Breast epithelium (tissue), 4 donors: ENCODE measurements at regions of chr17 and their contacts with region 1.

Region 1: GRCh38 chr17:80323982-80324381 is 63.3 kb downstream of the RNF213 start:
- DNase-seq: no peak
- H3K4me3 ChIP-seq: no peak overlapping the region
- H3K27ac ChIP-seq: no peak overlapping the region
- H3K4me1 ChIP-seq: no peaks in the 10 kb centered on the region
- H3K27me3 ChIP-seq: no peaks in the 10 kb centered on the region
- CTCF ChIP-seq: no peak
- POLR2A ChIP-seq: no peak

Region 2: GRCh38 chr17:80349151-80349651 is 25.2 kb after region 1 on chr17:
- intact Hi-C with region 1: loop called (anchors 2 kb)
- DNase-seq: no peak
- H3K4me3 ChIP-seq: no peak overlapping the region
- H3K27ac ChIP-seq: no peak overlapping the region
- H3K4me1 ChIP-seq: no peaks in the 10 kb centered on the region
- H3K27me3 ChIP-seq: no peaks in the 10 kb centered on the region
- CTCF ChIP-seq: no peak
- POLR2A ChIP-seq: no peak

Region 3: DNA sequence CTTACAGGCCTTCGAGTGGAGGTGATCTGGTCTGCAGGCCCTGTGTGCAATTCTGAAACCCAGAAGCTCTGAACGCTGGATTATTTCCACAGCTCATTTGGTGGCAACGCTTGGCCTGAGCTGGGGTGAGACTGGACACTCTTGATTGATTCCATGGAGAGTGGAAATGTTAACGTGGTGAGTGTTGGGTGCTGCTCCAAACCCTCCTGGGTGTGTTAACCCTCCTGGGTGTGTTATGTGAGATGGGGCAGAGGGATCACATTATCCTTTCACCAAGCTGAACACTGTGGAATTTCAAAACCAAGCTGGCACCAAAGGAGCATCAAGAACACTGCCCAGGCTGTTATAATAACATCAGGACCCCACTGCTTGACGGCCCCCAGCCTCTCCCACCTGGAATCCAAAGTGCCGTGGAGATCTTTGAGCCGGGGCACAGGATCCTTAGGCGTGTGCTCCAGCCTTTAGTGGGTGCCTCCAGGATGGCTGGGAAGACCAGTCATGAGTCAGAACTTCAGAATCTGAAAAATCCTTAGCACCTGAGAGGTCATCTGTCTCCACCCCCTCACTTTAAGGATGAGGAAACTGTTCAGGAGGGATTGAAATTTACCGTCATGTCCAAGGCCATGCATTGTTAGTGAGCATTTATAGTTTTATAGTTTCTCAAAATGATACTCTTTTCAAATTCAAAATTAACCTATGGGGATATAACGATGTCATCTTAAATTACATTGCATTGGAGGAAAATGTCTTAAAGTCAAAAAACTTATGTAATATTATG is 295.7 kb after region 1 on chr17:
- intact Hi-C with region 1: no loop called
- DNase-seq: no peak
- H3K4me3 ChIP-seq: no peak overlapping the region
- H3K27ac ChIP-seq: no peak overlapping the region
- H3K4me1 ChIP-seq: no peaks in the 10 kb centered on the region
- H3K27me3 ChIP-seq: no peaks in the 10 kb centered on the region
- CTCF ChIP-seq: no peak
- POLR2A ChIP-seq: no peak